WTC11 (cell line): ENCODE measurements at regions of chr12 and their contacts with region 1.

Region 1: GRCh38 chr12:109858764-109859163 is 21.6 kb downstream of the GLTP start:
- DNase-seq: no peak
- ATAC-seq: no peak
- H3K4me3 Mint-ChIP-seq: no peak overlapping the region
- H3K27ac Mint-ChIP-seq: no peak overlapping the region
- H3K4me1 Mint-ChIP-seq: peaks cover under 1% of the 10 kb centered on the region; the same call in 1 of the 2 replicates
- H3K27me3 Mint-ChIP-seq: no peaks in the 10 kb centered on the region
- CTCF ChIP-seq: no peak

Region 2: DNA sequence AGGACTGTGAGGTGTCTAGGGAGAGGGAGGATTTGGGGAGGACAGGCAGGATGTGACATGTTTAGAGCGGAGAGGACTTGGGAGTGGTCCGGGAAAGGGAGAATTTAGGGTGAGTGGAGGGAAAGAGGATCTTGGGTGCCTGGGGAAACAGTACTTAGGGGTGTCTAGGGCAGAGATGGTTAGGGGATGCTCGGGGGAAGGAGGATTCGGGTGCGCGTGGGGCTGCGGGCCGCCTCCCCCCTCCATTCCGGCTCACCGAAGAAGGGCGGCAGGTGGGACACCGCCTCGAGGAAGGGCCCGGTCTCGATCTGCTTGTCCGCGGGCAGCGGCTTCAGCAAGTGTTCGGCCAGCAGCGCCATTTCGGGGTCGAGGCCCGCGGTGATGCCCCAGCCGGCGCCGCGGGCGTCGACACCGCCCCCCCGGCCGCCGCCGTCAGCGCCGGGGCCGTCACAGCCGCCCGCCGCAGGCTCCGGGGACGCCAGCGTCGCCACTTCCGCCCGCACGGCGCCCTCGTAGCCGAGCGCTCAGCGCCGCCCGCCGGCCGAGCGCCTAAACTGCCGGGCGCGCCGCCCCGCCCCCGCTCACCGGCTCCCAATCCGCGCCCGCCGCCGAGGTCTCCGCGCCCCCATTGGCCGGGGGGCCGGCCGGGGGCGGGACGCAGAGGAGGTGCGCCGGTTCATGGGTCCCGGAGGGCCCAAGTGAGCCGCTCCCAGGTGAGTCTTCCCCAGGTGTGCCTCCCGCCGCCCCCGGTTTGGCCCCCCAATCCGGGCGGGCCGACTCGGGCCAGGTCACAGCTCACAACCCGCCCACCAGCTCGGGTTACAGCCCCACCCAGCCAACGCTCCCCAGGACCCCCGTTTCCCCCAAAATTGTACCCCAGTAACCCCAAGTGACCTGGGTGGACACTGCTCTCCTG is 21.5 kb after region 1 on chr12 and contains the start of gene GLTP:
- CTCF ChIA-PET with region 1: interaction called, 12 read pairs
- POLR2A ChIA-PET with region 1: no interaction called
- DNase-seq: peak; percentile 87
- ATAC-seq: peak; percentile 93
- H3K4me3 Mint-ChIP-seq: peak within 1 kb of the TSS; percentile 94
- H3K27ac Mint-ChIP-seq: peak within 1 kb of the TSS; percentile 93
- H3K4me1 Mint-ChIP-seq: peaks cover 51% of the 10 kb centered on the region
- H3K27me3 Mint-ChIP-seq: peaks cover 17% of the 10 kb centered on the region
- CTCF ChIP-seq: no peak
- total RNA-seq, gene GLTP: 21.6 to 25.8 TPM (median 22.8 TPM) in 3 replicates

Region 3: DNA sequence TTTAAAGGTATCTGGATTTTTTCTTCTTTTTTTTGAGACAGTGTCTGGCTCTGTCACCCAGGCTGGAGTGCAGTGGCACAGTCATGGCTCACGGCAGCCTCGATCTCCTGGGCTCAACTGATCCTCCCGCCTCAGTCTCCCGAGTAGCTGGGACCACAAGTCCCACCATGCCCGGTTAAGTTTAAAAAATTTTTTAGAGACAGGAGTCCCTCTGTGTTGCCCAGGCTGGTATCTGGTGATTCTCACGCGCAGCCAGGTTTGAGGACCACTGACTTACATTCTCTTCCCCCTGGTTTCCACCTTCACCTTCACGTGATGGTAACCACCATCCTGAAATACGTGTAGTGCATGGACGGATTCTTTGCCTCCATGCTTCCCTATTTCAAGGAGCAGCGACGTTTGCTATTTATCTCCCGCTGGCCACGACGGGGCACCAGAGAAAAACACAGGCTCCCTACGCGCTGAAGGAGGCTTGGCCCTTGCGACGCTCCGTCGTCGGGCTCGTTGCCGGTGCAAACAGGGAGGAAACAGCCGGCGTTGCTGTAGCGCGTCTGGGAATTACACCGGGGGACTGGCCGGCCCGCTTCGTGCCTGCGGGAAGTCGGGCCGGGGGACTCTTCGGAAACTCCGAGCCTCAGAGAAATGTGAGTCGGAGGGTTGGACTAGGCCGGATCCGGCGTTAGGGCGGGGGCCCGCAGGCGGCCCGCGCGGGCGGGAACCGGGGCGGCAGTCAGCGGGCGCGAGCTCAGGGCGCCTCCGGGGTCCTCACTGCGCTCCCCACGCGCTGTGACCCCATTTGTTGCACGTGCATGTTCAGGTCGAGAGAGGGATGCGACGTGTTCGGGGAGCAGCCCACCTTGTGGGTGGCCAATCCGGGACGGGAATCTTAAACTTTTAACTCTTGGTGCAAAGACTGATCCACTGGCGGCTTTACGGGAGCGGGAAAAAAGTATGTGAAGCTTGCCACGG is 41.3 kb after region 1 on chr12 and contains the start of gene TCHP:
- CTCF ChIA-PET with region 1: interaction called, 10 read pairs
- POLR2A ChIA-PET with region 1: interaction called, 3 read pairs
- DNase-seq: peak; percentile 74
- ATAC-seq: peak; percentile 49
- H3K4me3 Mint-ChIP-seq: peak within 1 kb of the TSS; percentile 85
- H3K27ac Mint-ChIP-seq: peak within 1 kb of the TSS; percentile 81
- H3K4me1 Mint-ChIP-seq: peaks cover 24% of the 10 kb centered on the region
- H3K27me3 Mint-ChIP-seq: peaks cover 99% of the 10 kb centered on the region
- CTCF ChIP-seq: no peak
- total RNA-seq, gene TCHP: 7.9 to 10.1 TPM (median 10.0 TPM) in 3 replicates

Region 4: GRCh38 chr12:109910969-109911348 is 52.2 kb after region 1 on chr12:
- CTCF ChIA-PET with region 1: interaction called, 43 read pairs
- POLR2A ChIA-PET with region 1: no interaction called
- DNase-seq: peak; percentile 93
- ATAC-seq: peak; percentile 99
- H3K4me3 Mint-ChIP-seq: no peak overlapping the region
- H3K27ac Mint-ChIP-seq: no peak overlapping the region
- H3K4me1 Mint-ChIP-seq: peaks cover 16% of the 10 kb centered on the region
- H3K27me3 Mint-ChIP-seq: peaks cover 50% of the 10 kb centered on the region
- CTCF ChIP-seq: peak; percentile 47; the same call in 1 of the 2 replicates